GM10248 (cell line): ENCODE measurements at regions of chr11 and their contacts with region 1.

Region 1: GRCh38 chr11:65134386-65135253 is at the start of gene SYVN1:
- DNase-seq: peak; percentile 95
- CTCF ChIP-seq: no peak

Region 2: DNA sequence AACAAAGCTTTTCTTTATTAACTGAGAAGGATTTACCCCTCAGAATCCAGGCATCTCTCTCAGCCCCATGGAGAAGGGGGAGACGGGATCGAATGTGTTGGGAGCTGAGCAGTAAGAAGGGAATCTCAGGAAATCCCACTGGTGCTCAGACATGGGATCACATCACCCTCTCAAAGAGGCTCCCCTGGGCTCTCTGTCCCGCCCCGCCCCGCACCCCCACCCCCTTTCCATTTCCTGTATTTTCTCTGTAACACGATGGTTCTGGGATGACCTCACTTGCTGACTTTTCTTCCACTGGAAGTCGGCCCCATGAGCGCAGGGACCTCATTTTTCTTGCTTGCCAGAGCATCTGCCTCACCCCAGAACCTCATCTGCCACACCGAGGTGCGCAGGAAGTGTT is 675.6 kb before region 1 on chr11:
- CTCF ChIA-PET with region 1: no interaction called
- POLR2A ChIA-PET with region 1: no interaction called
- DNase-seq: no peak
- CTCF ChIP-seq: no peak

Region 3: GRCh38 chr11:65147352-65148075 is 12.9 kb after region 1 on chr11:
- CTCF ChIA-PET with region 1: interaction called, 22 read pairs
- POLR2A ChIA-PET with region 1: interaction called, 6 read pairs
- DNase-seq: no peak
- CTCF ChIP-seq: no peak